Heart left ventricle (tissue), 16 donors: ENCODE measurements at regions of chr6 and their contacts with region 1.

Region 1: DNA sequence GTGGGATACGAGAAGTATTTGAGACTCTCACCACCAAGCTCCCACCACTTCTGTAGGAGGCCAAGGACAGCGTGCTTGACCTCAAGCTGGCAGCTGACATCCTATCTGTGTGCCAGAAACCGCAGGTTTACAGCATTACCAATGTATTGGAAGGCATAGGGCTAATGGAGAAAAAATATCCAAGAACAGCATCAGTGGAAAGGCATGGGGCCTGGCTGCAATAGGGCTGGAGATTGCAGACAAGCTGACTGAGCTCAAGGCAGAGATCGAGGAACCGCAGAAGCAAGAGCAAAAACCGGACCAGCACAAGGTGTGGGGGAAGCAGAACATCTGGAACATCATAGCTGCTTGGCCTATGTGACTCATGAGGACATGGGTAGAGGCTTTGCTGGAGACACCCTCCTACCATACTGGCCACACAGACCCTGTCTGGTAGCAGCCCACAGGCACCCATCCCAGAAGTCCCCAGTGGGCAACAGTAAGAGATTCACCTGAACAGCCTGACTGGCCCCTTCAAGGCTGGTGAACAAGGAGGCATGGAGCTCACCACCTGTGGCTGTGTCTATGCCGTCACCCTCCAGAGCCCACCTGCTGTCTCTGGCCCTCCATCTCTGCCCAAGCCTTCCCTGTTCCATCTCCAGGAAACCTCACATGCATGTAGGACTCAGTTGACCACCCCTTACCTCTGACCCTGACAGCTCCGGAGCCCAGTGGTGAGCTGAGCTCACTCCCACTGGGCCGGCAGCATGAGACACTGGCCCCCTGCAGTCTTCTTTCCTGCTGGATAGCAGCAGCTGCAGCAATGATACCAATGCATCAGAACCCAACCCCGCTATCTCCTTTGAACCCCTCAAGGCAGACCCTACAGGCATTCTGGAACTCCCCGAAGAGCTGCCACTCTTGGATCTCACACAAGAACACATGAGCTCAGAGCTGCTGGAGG is 171.1 kb downstream of the KIF6 start:
- DNase-seq: peak in 4 of 5 donors; percentile 25 to 43 (median 26)
- ATAC-seq: peak; percentile 34 to 63 (median 57)
- H3K4me3 ChIP-seq: no peak overlapping the region
- H3K27ac ChIP-seq: no peak overlapping the region
- H3K4me1 ChIP-seq: peaks cover 0 to 22% (median 0%) of the 10 kb centered on the region in 12 donors
- H3K27me3 ChIP-seq: no peaks in the 10 kb centered on the region
- CTCF ChIP-seq: no peak
- POLR2A ChIP-seq: no peak

Region 2: DNA sequence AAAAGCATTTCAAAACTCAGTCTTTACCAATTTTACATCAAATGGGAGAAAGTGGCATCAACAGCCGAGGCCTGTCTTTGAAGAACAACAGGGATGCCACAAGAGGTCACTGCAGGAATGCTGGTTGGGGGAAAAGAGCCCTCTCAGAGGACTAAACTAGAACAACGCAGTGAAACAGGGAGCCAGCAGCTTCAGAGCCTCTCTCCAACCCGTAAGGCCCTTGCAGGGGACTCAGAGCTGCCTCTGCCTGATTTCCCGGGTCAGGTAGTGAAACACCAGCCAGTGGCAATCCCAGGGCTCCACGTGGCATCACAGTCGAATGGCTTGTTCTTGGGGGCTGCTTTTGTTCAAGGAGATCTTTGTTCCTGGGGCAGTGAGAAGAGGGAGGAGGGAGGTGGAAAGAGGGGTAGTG is 176.6 kb before region 1 on chr6:
- intact Hi-C with region 1: loop called in 1 of 10 experiments (anchors 10 kb)
- DNase-seq: peak in 4 of 5 donors; percentile 59 to 69 (median 62)
- ATAC-seq: peak; percentile 62 to 94 (median 88)
- H3K4me3 ChIP-seq: no peak overlapping the region
- H3K27ac ChIP-seq: no peak overlapping the region
- H3K4me1 ChIP-seq: peaks cover 0 to 10% (median 2%) of the 10 kb centered on the region in 12 donors
- H3K27me3 ChIP-seq: no peaks in the 10 kb centered on the region
- CTCF ChIP-seq: peak; percentile 35 to 77 (median 68)
- POLR2A ChIP-seq: no peak